Ascending aorta (tissue), 2 donors: ENCODE measurements at regions of chr6 and their contacts with region 1.

Region 1: GRCh38 chr6:52598123-52598823 is 21.4 kb upstream of the TRAM2 start:
- DNase-seq: peak in 1 of 2 donors; percentile 85
- H3K4me3 ChIP-seq: peak overlapping the region in 1 of 2 donors; percentile 46
- H3K27ac ChIP-seq: peak overlapping the region; percentile 64 to 78
- H3K4me1 ChIP-seq: peaks cover 16 to 33% of the 10 kb centered on the region in 2 donors
- H3K27me3 ChIP-seq: no peaks in the 10 kb centered on the region
- CTCF ChIP-seq: peak; percentile 64 to 79 (median 69)

Region 2: GRCh38 chr6:52284460-52285176 is 313.7 kb before region 1 on chr6 and contains the start of gene MCM3:
- intact Hi-C with region 1: loop called (anchors 5 kb)
- DNase-seq: peak; percentile 96 to 99
- H3K4me3 ChIP-seq: peak within 1 kb of the TSS; percentile 75 to 100
- H3K27ac ChIP-seq: peak within 1 kb of the TSS; percentile 71 to 72
- H3K4me1 ChIP-seq: peaks cover 10 to 11% of the 10 kb centered on the region in 2 donors
- H3K27me3 ChIP-seq: no peaks in the 10 kb centered on the region
- CTCF ChIP-seq: no peak
- total RNA-seq, gene MCM3: 44.6 TPM

Region 3: GRCh38 chr6:52497652-52498408 is 100.4 kb before region 1 on chr6:
- intact Hi-C with region 1: loop called (anchors 2 kb)
- DNase-seq: peak in 1 of 2 donors; percentile 86
- H3K4me3 ChIP-seq: no peak overlapping the region
- H3K27ac ChIP-seq: peak overlapping the region; percentile 78 to 90
- H3K4me1 ChIP-seq: peaks cover 11 to 31% of the 10 kb centered on the region in 2 donors
- H3K27me3 ChIP-seq: no peaks in the 10 kb centered on the region
- CTCF ChIP-seq: no peak

Region 4: GRCh38 chr6:52566853-52567279 is 31.4 kb before region 1 on chr6:
- intact Hi-C with region 1: no loop called
- DNase-seq: no peak
- H3K4me3 ChIP-seq: no peak overlapping the region
- H3K27ac ChIP-seq: peak overlapping the region; percentile 99 to 100
- H3K4me1 ChIP-seq: peaks cover 27 to 71% of the 10 kb centered on the region in 2 donors
- H3K27me3 ChIP-seq: no peaks in the 10 kb centered on the region
- CTCF ChIP-seq: no peak

Region 5: GRCh38 chr6:52724406-52725121 is 126.3 kb after region 1 on chr6:
- intact Hi-C with region 1: loop called (anchors 10 kb)
- DNase-seq: peak; percentile 61 to 89
- H3K4me3 ChIP-seq: no peak overlapping the region
- H3K27ac ChIP-seq: peak overlapping the region; percentile 71 to 91
- H3K4me1 ChIP-seq: peaks cover 2 to 9% of the 10 kb centered on the region in 2 donors
- H3K27me3 ChIP-seq: no peaks in the 10 kb centered on the region
- CTCF ChIP-seq: peak in 2 of 3 experiments; percentile 43 to 48

Region 6: GRCh38 chr6:52868240-52868639 is 270.0 kb after region 1 on chr6:
- intact Hi-C with region 1: no loop called
- DNase-seq: no peak
- H3K4me3 ChIP-seq: no peak overlapping the region
- H3K27ac ChIP-seq: no peak overlapping the region
- H3K4me1 ChIP-seq: no peaks in the 10 kb centered on the region
- H3K27me3 ChIP-seq: no peaks in the 10 kb centered on the region
- CTCF ChIP-seq: no peak